Activated CD4-positive, alpha-beta T cell treated with anti-CD3 and anti-CD28 coated beads, Interleukin-2, amount 10 ng/mL, durations not matched to agents 24 days and 14 days (primary cell): ENCODE measurements at regions of chr15 and their contacts with region 1.

Region 1: GRCh38 chr15:52179278-52180195 is 11.7 kb downstream of the GNB5 start:
- DNase-seq: peak; percentile 97
- H3K4me3 Mint-ChIP-seq: peak overlapping the region; percentile 87
- H3K27ac Mint-ChIP-seq: peak overlapping the region; percentile 97
- H3K4me1 Mint-ChIP-seq: peaks cover 26% of the 10 kb centered on the region
- H3K27me3 Mint-ChIP-seq: no peaks in the 10 kb centered on the region

Region 2: DNA sequence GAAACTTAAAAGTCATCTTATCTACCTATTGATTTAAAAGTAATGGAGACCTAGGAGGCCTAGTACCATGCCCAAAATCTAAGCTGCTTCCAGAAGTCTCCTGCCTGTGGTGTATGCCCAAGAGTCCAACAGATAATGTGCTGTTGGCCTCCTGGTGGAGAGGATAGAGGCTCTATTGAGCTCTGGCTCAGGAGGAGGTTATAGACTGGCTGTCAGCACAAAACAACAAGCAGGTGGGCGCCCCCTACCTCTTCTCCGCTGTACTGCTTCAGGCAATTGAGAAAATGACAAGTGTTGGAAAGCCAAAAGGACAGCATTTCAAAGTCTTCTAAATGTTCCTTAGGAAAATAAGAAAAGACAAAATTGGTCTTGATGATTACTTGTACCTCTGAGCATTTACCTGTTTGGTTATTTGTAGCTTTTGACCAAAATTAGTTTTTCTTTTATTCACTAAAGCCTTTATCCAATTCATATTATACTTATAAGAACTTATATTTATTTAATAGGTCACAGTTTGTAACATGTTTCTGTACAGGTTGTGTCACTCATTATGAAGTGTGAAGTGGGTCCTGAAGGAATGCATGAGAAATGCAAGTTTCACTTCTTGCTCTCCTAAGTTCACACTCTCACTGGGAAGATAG is 28.9 kb after region 1 on chr15:
- intact Hi-C with region 1: loop called (anchors 2 kb)
- DNase-seq: peak; percentile 93
- H3K4me3 Mint-ChIP-seq: no peak overlapping the region
- H3K27ac Mint-ChIP-seq: no peak overlapping the region
- H3K4me1 Mint-ChIP-seq: peaks cover 6% of the 10 kb centered on the region
- H3K27me3 Mint-ChIP-seq: peaks cover 4% of the 10 kb centered on the region

Region 3: GRCh38 chr15:52417521-52417920 is 238.0 kb after region 1 on chr15:
- intact Hi-C with region 1: no loop called
- DNase-seq: no peak
- H3K4me3 Mint-ChIP-seq: no peak overlapping the region
- H3K27ac Mint-ChIP-seq: no peak overlapping the region
- H3K4me1 Mint-ChIP-seq: peaks cover 5% of the 10 kb centered on the region
- H3K27me3 Mint-ChIP-seq: no peaks in the 10 kb centered on the region